ENCODE measurements at regions of chr16 and their contacts with region 1.

Region 1: DNA sequence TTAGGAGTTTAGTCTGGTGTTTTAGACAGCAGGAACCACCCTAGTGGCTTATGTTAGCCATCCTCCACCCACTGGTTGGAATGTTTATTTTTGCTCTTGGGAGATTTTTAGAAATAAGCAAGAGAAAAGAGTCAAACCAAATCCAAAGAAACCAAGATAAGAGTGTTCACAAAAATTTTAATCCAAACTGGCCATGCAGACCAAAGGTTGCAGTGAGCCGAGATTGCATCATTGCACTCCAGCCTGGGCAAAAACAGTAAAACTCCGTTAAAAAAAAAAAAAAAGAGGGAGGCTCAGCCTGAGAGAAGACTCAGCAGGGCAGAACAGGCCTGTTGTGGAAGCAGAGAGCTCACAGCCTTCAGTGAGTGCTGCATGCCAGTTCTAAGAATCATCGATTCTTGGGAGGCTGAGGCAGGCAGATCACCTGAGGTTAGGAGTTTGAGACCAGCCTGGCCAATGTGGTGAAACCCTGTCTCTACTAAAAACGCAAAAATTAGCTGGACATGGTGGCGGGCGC is 12.2 kb upstream of the C16orf54 start:
- DNase-seq: no peak
- H3K4me3 Mint-ChIP-seq: no peak overlapping the region
- H3K27ac Mint-ChIP-seq: no peak overlapping the region
- H3K4me1 Mint-ChIP-seq: peaks cover 19% of the 10 kb centered on the region
- H3K27me3 Mint-ChIP-seq: no peaks in the 10 kb centered on the region

Region 2: DNA sequence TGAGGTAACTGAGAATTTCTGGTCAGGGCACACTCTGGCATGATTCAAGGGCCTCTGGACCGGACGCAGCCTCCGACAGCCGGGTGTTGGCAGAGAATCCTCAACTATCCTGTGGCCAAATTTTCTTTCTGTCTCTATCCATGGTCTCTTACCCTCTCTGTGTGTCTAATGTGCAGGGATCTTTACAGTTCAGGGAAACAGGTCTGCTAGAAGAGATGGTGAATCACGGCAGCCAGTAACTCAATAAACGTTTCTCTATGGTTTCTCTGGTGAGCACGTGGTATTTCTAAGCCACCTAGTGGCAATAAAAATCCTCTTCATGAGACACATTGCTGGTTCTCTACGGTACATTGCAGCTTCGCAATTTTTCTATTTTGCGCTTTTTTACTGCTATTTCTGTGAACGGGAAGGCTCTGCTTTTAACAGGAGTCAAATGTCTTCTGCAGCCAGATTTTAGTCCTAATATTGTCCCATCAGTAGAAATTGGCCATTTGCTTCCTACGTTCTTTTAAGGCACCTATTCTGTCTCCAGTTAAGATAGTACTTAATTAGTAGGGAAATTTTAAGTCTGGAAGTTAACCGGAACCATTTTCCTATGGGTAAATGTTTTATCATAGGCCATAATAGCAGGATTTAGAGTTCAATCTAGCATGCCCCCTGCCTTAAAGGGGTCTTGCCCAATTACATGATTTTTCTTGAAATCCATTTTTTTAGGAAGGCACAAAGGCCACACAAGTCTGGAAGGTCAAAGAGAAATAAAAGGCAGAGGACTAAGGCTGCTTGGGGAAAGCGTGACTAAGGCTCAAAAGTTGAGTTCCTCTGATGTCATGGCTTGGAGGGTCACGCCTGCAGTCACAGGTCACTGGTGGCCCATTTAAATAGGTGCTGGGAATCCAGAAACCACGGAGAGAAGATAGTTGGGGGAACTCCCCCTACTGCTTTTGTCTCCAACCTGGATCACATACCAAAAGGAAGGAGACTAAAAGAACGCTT is 47.5 kb before region 1 on chr16:
- CTCF ChIA-PET with region 1: interaction called, 11 read pairs
- POLR2A ChIA-PET with region 1: no interaction called
- DNase-seq: peak; percentile 34
- H3K4me3 Mint-ChIP-seq: no peak overlapping the region
- H3K27ac Mint-ChIP-seq: no peak overlapping the region
- H3K4me1 Mint-ChIP-seq: peaks cover 16% of the 10 kb centered on the region
- H3K27me3 Mint-ChIP-seq: peaks cover 8% of the 10 kb centered on the region

Measured in activated CD4-positive, alpha-beta memory T cell treated with anti-CD3 and anti-CD28 coated beads, Interleukin-2, amount 10 ng/mL, durations not matched to agents 7 days and 5 days (primary cell).